ENCODE measurements at regions of chr4 and their contacts with region 1.

Region 1: DNA sequence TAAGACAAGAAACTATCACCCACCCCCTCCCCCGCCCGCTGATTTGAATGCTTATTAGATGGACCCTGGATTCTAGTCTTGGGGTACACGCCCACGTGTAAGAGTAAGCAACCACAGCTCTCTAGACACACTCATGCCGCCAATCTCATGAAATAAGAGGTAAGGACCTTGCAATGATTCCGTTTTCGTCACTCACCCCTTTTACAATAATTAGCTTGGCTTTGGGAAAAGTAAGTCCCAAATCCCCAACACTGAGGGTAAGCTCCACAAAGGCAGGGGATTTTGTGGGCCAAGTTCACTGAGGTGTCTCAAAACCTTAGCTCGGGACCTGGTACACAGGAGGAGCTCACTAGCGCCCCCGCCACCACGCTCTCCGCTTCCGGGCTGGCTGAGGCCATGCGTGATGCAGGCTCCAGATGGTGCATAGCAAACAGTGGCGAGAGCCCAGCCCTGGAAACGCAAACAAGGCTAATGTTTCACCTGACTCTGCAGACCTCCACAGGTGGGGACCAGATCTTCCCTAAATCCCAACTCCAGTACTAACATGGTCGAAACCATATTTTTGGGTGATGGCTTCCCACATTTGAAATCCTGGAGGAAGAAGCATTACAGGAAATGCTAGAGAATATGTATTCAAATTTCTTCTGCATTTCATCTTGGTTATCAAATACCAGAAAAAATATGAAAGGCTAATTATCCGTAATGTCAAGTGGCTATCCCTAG is 4.1 kb downstream of the PLAC8 start:
- DNase-seq: peak; percentile 84 to 90 (median 87)
- H3K4me3 ChIP-seq: peak overlapping the region; percentile 60 to 75
- H3K4me3 Mint-ChIP-seq: peak overlapping the region; percentile 93 to 98 (median 95)
- H3K27ac ChIP-seq: peak overlapping the region; percentile 58
- H3K27ac Mint-ChIP-seq: peak overlapping the region; percentile 90 to 98 (median 96)
- H3K4me1 ChIP-seq: peaks cover 56% of the 10 kb centered on the region
- H3K4me1 Mint-ChIP-seq: peaks cover 27 to 70% (median 46%) of the 10 kb centered on the region in 4 donors
- H3K27me3 ChIP-seq: no peaks in the 10 kb centered on the region
- H3K27me3 Mint-ChIP-seq: no peaks in the 10 kb centered on the region

Region 2: GRCh38 chr4:82900331-82901128 is 209.9 kb before region 1 on chr4 and contains the start of gene THAP9:
- CTCF ChIA-PET with region 1: no interaction called
- POLR2A ChIA-PET with region 1: interaction called, 5 read pairs
- intact Hi-C with region 1: loop called (anchors 2 kb)
- DNase-seq: peak; percentile 98 to 100 (median 99)
- H3K4me3 ChIP-seq: peak within 1 kb of the TSS; percentile 92 to 99
- H3K4me3 Mint-ChIP-seq: no peak within 1 kb of the TSS
- H3K27ac ChIP-seq: peak within 1 kb of the TSS; percentile 98
- H3K27ac Mint-ChIP-seq: no peak within 1 kb of the TSS
- H3K4me1 ChIP-seq: peaks cover 47% of the 10 kb centered on the region
- H3K4me1 Mint-ChIP-seq: peaks cover 10 to 20% (median 16%) of the 10 kb centered on the region in 4 donors
- H3K27me3 ChIP-seq: no peaks in the 10 kb centered on the region
- H3K27me3 Mint-ChIP-seq: no peaks in the 10 kb centered on the region
- total RNA-seq, gene THAP9: 2.7 to 3.7 TPM

Region 3: DNA sequence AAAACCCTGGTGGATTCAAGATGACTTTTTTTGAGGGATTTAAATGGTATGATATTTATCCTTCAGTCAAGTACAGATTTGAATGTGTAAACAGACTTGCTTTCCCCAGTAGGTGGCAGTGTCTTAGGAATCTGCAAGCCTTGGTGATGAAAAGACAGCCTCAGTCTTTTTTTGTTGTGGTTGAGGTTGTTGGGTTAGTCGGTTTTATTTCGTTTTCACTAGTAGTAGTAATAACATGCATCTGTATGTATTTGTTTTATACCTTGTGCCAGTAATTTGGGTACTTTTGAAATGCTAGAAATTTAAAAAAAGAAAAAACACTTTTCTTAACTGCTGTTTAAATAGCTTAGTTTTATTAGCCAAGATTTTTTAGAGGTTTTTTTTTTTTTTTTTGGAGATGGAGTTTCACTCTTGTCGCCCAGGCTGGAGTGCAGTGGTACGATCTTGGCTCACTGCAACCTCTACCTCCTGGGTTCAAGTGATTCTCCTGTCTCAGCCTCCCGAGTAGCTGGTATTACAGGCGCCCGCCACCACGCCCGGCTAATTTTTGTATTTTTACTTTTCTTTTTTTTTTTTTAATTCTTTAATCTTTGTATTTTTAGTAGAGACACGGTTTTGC is 36.2 kb before region 1 on chr4:
- CTCF ChIA-PET with region 1: interaction called, 65 read pairs
- POLR2A ChIA-PET with region 1: interaction called, 17 read pairs
- intact Hi-C with region 1: loop called (anchors 1 kb)
- DNase-seq: peak; percentile 84 to 89 (median 85)
- H3K4me3 ChIP-seq: no peak overlapping the region
- H3K4me3 Mint-ChIP-seq: peak overlapping the region; percentile 59 to 83 (median 74)
- H3K27ac ChIP-seq: no peak overlapping the region
- H3K27ac Mint-ChIP-seq: peak overlapping the region; percentile 43 to 85 (median 63)
- H3K4me1 ChIP-seq: no peaks in the 10 kb centered on the region
- H3K4me1 Mint-ChIP-seq: peaks cover 4 to 14% (median 5%) of the 10 kb centered on the region in 4 donors
- H3K27me3 ChIP-seq: no peaks in the 10 kb centered on the region
- H3K27me3 Mint-ChIP-seq: no peaks in the 10 kb centered on the region

Region 4: GRCh38 chr4:83124111-83124780 is 13.9 kb after region 1 on chr4:
- CTCF ChIA-PET with region 1: interaction called, 34 read pairs
- POLR2A ChIA-PET with region 1: interaction called, 26 read pairs
- intact Hi-C with region 1: loop called (anchors 1 kb)
- DNase-seq: no peak
- H3K4me3 ChIP-seq: no peak overlapping the region
- H3K4me3 Mint-ChIP-seq: peak overlapping the region in 2 of 8 donors; percentile 15 to 25
- H3K27ac ChIP-seq: no peak overlapping the region
- H3K27ac Mint-ChIP-seq: peak overlapping the region in 2 of 7 donors; percentile 17 to 31
- H3K4me1 ChIP-seq: peaks cover 12% of the 10 kb centered on the region
- H3K4me1 Mint-ChIP-seq: peaks cover 8 to 17% (median 11%) of the 10 kb centered on the region in 4 donors
- H3K27me3 ChIP-seq: no peaks in the 10 kb centered on the region
- H3K27me3 Mint-ChIP-seq: no peaks in the 10 kb centered on the region

Region 5: GRCh38 chr4:83217721-83218522 is 107.5 kb after region 1 on chr4:
- CTCF ChIA-PET with region 1: interaction called, 125 read pairs
- POLR2A ChIA-PET with region 1: interaction called, 130 read pairs
- intact Hi-C with region 1: loop called (anchors 1 kb)
- DNase-seq: peak; percentile 82 to 91 (median 86)
- H3K4me3 ChIP-seq: peak overlapping the region in 1 of 2 donors; percentile 9
- H3K4me3 Mint-ChIP-seq: peak overlapping the region; percentile 55 to 77 (median 70)
- H3K27ac ChIP-seq: peak overlapping the region; percentile 64
- H3K27ac Mint-ChIP-seq: peak overlapping the region; percentile 77 to 94 (median 91)
- H3K4me1 ChIP-seq: peaks cover 85% of the 10 kb centered on the region
- H3K4me1 Mint-ChIP-seq: peaks cover 58 to 85% (median 71%) of the 10 kb centered on the region in 4 donors
- H3K27me3 ChIP-seq: no peaks in the 10 kb centered on the region
- H3K27me3 Mint-ChIP-seq: no peaks in the 10 kb centered on the region

Region 6: DNA sequence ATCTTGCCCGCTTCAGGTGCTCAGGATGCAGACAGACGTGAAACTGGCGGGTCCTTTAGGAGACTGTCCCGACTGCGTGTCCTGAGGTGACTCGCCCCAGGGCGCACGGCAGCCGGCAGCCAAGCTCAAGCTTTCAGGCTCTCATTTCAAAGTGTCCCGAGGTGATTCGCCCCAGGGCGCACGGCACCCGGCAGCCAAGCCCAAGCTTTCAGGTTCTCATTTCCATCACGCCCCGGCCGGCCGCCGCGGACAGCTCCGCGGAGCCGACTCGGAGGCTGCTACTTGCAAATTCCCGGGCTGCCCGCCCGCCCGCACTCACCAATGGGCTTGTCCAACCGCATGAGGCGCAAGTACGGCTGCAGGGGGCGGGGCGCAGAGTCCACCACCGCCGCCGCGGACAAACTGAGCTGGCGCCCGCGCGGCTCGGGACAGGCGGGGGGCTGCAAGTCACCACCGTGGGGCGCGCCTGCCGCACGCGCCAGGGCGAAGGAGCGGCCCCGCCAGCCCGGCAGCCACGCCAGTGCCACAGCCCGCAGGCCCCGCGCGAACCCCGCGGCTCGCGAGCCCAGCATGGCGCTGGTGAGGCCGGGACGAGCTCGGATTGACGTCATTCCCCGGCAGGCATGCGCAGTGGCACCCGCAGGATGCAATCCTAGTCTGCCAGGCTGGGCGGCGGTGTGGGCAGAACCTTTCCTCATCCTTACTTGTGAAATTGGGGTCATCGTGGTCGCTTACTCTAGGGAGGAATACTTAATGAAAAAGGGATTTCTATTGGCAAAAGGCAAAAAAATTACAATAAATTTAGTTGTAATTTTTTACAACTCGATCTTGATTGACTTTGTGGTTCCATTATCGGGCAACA is 174.0 kb after region 1 on chr4 and contains the start of gene COQ2:
- CTCF ChIA-PET with region 1: interaction called, 10 read pairs
- POLR2A ChIA-PET with region 1: interaction called, 4 read pairs
- intact Hi-C with region 1: no loop called
- DNase-seq: peak; percentile 90 to 93 (median 91)
- H3K4me3 ChIP-seq: peak within 1 kb of the TSS; percentile 84 to 90
- H3K4me3 Mint-ChIP-seq: peak within 1 kb of the TSS; percentile 94 to 99 (median 98)
- H3K27ac ChIP-seq: peak within 1 kb of the TSS; percentile 60
- H3K27ac Mint-ChIP-seq: peak within 1 kb of the TSS; percentile 93 to 99 (median 99)
- H3K4me1 ChIP-seq: peaks cover 24% of the 10 kb centered on the region
- H3K4me1 Mint-ChIP-seq: peaks cover 26 to 46% (median 32%) of the 10 kb centered on the region in 4 donors
- H3K27me3 ChIP-seq: no peaks in the 10 kb centered on the region
- H3K27me3 Mint-ChIP-seq: no peaks in the 10 kb centered on the region
- total RNA-seq, gene COQ2: 6.5 to 7.2 TPM